Heart left ventricle (tissue), 16 donors: ENCODE measurements at regions of chr13 and their contacts with region 1.

Region 1: DNA sequence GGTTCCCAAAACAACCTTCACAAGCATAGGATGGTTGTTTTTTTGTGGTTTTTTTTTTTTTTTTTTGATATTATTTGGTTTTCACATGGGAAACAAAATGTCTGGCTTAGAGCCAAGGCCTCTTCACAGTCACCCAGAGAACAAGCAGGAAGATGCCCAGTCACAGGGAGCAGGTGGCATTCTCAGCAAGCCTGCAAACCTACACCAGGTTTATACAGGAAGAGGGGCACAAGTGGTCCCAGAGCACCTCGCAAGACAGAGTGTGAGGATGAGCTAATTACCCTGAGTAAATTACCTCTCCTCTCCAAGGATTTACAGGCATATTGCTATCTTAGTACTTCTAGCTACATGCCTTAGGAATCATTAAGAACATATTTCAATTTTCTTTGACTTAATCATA is 1375.6 kb downstream of the EFNB2 start:
- DNase-seq: no peak
- ATAC-seq: no peak
- H3K4me3 ChIP-seq: no peak overlapping the region
- H3K27ac ChIP-seq: no peak overlapping the region
- H3K4me1 ChIP-seq: no peaks in the 10 kb centered on the region
- H3K27me3 ChIP-seq: no peaks in the 10 kb centered on the region
- CTCF ChIP-seq: no peak
- POLR2A ChIP-seq: no peak

Region 2: DNA sequence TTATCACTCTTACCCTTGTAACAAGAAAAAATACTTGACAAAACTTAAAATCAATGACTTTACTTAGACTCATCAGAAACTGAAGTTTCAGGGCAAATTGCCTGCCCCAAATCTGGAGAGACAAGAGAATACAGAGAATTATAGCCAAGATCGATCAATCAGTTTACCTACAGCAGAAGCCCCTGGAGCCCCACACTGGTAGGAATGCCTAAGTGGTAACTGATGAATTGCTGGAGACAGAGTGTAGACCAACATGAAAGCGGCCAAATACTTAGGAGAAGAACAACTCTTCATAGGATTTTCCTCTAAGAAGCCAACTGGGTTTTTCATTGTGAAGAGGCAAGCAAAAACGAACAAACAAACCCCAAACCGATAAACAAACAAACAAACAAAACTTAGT is 54.4 kb before region 1 on chr13:
- intact Hi-C with region 1: loop called in 1 of 10 experiments (anchors 10 kb)
- DNase-seq: no peak
- ATAC-seq: no peak
- H3K4me3 ChIP-seq: no peak overlapping the region
- H3K27ac ChIP-seq: no peak overlapping the region
- H3K4me1 ChIP-seq: no peaks in the 10 kb centered on the region
- H3K27me3 ChIP-seq: no peaks in the 10 kb centered on the region
- CTCF ChIP-seq: no peak
- POLR2A ChIP-seq: no peak

Region 3: GRCh38 chr13:105817021-105817420 is 657.2 kb after region 1 on chr13:
- intact Hi-C with region 1: no loop called
- DNase-seq: no peak
- ATAC-seq: no peak
- H3K4me3 ChIP-seq: no peak overlapping the region
- H3K27ac ChIP-seq: no peak overlapping the region
- H3K4me1 ChIP-seq: no peaks in the 10 kb centered on the region
- H3K27me3 ChIP-seq: no peaks in the 10 kb centered on the region
- CTCF ChIP-seq: no peak
- POLR2A ChIP-seq: no peak

Region 4: GRCh38 chr13:105908586-105908985 is 748.7 kb after region 1 on chr13:
- intact Hi-C with region 1: no loop called
- DNase-seq: no peak
- ATAC-seq: no peak
- H3K4me3 ChIP-seq: no peak overlapping the region
- H3K27ac ChIP-seq: no peak overlapping the region
- H3K4me1 ChIP-seq: no peaks in the 10 kb centered on the region
- H3K27me3 ChIP-seq: no peaks in the 10 kb centered on the region
- CTCF ChIP-seq: no peak
- POLR2A ChIP-seq: no peak